WTC11 (cell line): ENCODE measurements at regions of chr7 and their contacts with region 1.

Region 1: DNA sequence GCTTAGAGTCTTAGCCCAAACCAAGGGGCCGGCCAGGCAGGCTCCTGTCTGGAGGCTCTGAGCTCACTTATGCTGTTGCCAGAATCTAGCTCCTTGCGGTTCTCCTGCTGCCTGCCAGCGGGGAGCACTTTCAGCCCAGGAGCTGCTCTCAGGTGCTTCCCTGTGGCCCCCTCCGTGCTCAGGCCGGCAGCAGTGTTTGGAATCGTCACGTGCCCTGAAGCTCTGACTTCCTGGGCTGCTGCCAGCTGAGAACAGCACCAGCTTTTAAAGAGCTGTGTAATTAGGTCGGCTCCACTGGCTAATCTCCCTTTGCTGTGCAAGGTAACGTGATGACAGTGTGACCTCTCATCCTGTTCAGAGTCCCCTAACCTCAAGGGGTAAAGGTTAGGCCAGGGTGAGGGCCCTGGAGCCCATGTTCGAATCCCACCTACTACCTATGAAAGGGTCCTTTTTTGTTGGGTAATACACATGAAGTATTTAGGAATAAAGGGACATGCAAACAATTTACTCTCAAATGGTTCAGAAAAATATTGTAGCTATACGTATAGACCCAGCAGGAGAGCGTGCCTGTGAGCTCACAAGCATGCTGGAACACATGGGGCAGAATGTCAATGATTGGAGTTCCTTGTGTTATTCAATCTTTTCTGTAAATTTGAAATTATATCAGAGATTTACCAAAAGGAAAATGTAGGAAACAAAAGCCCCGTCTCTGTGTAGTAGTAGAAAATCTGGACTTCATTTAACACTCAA is 16.6 kb downstream of the ZNF862 start:
- DNase-seq: peak; percentile 64
- ATAC-seq: peak; percentile 78
- H3K4me3 Mint-ChIP-seq: peak overlapping the region; percentile 46
- H3K27ac Mint-ChIP-seq: peak overlapping the region; percentile 58; the same call in 1 of the 2 replicates
- H3K4me1 Mint-ChIP-seq: peaks cover 32% of the 10 kb centered on the region
- H3K27me3 Mint-ChIP-seq: no peaks in the 10 kb centered on the region
- CTCF ChIP-seq: no peak

Region 2: DNA sequence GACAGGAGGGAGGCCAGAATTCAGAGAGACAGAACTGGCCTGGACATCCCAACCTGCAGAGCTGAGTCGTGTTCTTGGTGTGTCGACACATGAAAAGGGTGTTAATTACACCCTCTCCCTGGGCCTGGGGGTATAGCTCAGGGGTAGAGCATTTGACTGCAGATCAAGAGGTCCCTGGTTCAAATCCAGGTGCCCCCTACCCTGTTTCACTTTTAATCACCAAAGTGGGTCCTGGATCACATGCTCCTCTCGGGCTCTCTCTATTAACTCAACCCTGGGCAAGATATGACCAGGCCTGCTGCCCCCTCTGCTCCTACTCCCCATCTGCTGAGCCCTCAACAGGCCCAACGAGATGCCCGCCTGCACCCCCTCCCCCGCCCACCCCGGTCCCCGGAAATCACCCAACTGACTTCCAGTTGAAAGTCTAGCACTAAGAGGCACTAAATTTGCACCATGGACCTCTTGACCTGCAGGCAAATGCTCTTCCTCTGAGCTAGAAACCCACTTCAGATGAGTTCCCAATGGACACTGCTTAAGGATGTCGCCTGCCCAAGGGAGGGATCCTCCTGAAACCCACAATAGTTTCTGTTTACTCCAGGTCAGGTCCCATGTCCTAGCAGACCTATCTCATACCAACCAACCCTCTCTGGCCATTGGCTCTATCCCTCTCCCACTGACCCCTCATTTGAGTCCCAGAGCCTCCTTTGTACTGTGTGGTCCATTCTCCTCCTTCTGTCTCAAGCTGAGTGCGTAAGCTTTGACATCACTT is 219.0 kb before region 1 on chr7:
- CTCF ChIA-PET with region 1: no interaction called
- POLR2A ChIA-PET with region 1: no interaction called
- DNase-seq: peak; percentile 76
- ATAC-seq: peak; percentile 97
- H3K4me3 Mint-ChIP-seq: peak overlapping the region; percentile 15; the same call in 1 of the 2 replicates
- H3K27ac Mint-ChIP-seq: 0 out of 2 replicates have a peak overlapping the region, but pooled peaks have one; percentile 50
- H3K4me1 Mint-ChIP-seq: peaks cover 4% of the 10 kb centered on the region; the same call in 1 of the 2 replicates
- H3K27me3 Mint-ChIP-seq: peaks cover 18% of the 10 kb centered on the region
- CTCF ChIP-seq: no peak

Region 3: DNA sequence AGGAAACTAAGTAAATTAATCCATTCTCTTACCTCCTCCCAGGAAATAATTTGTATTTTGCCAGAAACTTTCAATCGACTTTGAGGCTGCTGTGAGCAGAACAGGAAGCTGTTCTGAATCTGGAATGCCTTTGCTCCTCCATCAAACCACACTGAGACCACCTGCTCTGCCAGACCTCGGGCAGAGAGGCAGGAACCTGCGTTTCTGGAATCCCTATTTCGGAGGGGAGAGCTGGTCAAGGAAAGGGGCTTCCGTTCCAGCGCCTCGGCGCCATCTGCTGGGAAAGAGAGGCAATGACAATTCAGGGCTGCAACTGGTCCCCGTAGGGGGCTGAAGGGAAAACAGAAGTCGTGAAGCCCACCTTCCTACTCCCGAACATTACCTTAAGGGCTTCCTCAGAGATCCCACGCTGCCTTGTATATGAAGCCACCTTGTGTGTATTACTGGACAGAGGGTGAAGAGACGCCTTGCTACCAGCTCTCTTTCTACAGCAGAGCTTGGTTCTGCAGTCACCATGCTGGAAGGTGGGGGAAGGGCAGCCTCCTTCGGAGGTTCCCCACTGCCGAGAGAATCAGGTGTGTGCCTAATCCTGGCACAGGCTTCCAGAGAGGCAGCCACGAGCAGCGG is 112.6 kb before region 1 on chr7:
- CTCF ChIA-PET with region 1: interaction called, 10 read pairs
- POLR2A ChIA-PET with region 1: no interaction called
- DNase-seq: peak; percentile 88
- ATAC-seq: peak; percentile 96
- H3K4me3 Mint-ChIP-seq: peak overlapping the region; percentile 73
- H3K27ac Mint-ChIP-seq: no peak overlapping the region
- H3K4me1 Mint-ChIP-seq: peaks cover 3% of the 10 kb centered on the region
- H3K27me3 Mint-ChIP-seq: peaks cover 15% of the 10 kb centered on the region
- CTCF ChIP-seq: peak; percentile 75

Region 4: DNA sequence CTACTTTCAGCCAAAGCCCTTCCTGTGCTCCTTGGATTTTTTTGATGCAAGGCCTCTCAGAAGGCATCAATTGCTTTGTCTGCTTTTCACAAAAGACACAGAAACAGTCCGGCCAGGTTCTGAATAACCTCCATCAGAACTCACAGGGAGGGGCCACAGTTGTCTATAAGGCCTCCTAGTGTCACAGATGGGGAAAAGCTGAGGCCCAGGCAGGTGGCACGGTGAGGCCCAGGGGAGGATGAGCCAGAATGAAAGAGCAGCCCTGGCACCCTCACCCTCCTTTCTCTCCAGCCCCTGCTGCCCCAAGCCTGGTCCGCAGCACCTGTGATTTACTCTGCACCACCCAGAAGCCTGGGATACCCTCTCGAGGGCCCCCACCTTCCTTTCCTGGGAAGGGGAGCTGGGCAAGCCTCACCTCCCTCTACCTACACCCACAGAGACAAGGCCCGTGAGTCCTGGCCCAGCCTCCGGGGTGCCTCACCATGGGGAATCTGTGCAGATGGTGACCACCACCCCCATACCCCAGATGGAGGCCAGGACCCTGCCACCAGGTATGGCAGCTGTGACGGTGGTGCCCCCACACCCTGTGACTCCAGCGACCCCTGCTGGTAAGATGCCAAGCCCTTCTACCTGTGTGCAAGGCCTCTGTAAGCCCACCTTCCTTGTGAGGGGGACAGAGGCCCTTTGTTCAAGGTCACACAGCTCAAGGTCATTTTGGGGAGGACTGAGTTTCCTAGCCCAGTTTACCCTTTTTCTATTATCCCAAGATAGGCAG is 55.2 kb before region 1 on chr7:
- CTCF ChIA-PET with region 1: interaction called, 30 read pairs
- POLR2A ChIA-PET with region 1: no interaction called
- DNase-seq: peak; percentile 83
- ATAC-seq: peak; percentile 80
- H3K4me3 Mint-ChIP-seq: no peak overlapping the region
- H3K27ac Mint-ChIP-seq: no peak overlapping the region
- H3K4me1 Mint-ChIP-seq: no peaks in the 10 kb centered on the region
- H3K27me3 Mint-ChIP-seq: no peaks in the 10 kb centered on the region
- CTCF ChIP-seq: peak; percentile 67

Region 5: GRCh38 chr7:149821447-149822191 is 33.2 kb before region 1 on chr7:
- CTCF ChIA-PET with region 1: interaction called, 13 read pairs
- POLR2A ChIA-PET with region 1: no interaction called
- DNase-seq: no peak
- ATAC-seq: no peak
- H3K4me3 Mint-ChIP-seq: no peak overlapping the region
- H3K27ac Mint-ChIP-seq: no peak overlapping the region
- H3K4me1 Mint-ChIP-seq: no peaks in the 10 kb centered on the region
- H3K27me3 Mint-ChIP-seq: no peaks in the 10 kb centered on the region; the same call in 1 of the 2 replicates
- CTCF ChIP-seq: no peak

Region 6: DNA sequence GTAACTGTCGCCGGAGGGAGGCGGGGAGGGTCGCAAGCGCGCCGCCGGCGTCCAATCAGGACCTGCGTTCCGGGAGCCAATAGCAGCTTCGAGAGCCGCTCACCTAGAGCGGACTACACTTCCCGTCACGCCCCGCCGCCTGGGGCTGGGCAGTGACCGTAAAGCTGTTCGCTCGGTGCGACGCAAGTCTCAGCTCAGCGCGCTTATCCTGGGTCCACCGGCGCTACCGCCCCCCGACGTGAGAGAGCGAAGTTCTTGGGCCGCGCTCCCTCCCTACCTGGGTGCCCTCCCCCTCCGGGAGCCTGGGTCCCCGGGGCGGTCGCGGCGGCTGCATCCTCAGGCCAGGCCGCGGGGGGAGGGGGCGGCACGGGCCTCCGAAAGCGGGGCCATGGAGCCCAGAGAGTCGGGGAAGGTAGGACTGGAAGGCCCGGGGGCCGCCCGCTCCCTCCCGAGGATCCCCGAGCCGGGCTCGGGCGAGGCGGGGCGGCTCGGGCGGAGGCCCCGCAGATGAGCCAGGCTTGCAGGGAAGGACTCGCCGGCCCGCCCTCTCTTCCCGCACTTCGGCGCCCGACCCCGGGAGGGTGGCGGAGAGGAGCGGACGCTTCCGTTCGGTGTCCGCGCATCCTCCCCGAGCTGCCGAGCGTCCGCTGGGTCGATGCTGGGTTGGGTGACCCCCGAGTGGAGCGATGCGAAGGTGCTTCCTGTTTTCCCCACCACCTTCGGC is 16.4 kb before region 1 on chr7 and contains the start of gene ZNF862:
- CTCF ChIA-PET with region 1: interaction called, 46 read pairs
- POLR2A ChIA-PET with region 1: interaction called, 7 read pairs
- DNase-seq: peak; percentile 98
- ATAC-seq: peak; percentile 97
- H3K4me3 Mint-ChIP-seq: peak within 1 kb of the TSS; percentile 78
- H3K27ac Mint-ChIP-seq: peak within 1 kb of the TSS; percentile 77; the same call in 1 of the 2 replicates
- H3K4me1 Mint-ChIP-seq: peaks cover 13% of the 10 kb centered on the region
- H3K27me3 Mint-ChIP-seq: peaks cover 27% of the 10 kb centered on the region
- CTCF ChIP-seq: no peak
- total RNA-seq, gene ZNF862: 3.6 to 6.3 TPM (median 5.8 TPM) in 3 replicates